ENCODE measurements at regions of chr16 and their contacts with region 1.

Region 1: DNA sequence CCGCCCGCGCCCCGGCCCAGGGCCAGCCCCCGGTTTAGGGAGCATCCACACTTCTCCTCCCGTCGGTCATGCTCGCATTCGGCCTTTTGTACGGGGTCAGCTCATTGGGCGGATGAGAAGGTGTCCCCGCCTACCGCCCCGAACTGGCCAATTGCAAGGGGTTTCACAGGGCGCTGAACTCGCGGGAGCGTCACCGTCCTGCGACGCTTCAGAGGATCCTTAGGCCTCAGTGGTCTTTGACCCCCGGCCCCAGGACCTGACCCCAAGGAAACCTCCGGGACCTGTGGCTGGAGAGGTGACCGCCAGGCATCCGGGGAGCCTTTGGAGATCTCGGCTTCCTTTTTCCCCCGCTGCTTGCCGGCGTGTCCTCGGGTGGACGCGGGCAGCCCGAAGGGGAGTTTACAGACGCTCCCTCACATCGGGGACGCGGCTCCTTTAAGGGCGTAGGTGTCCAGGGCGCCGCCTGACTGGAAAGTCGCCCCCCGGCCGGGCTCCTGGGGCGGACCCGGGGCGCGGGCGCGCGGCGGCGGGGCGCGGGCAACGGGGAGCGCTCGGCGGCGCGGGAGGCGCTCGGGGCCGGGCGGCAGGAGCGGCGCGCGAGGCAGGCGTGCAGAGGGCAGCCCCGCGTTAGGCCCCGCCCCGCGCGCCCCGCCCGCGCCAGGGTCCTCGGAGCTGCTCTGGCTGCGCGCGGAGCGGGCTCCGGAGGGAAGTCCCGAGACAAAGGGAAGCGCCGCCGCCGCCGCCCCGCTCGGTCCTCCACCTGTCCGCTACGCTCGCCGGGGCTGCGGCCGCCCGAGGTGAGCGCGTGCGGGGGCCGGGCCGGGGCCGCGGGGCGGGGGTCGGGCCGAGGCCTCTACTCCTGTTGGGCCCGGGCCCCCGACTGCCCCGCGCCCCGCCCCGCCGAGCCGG is at the start of gene UBE2I:
- DNase-seq: peak; percentile 96 to 99 (median 98)
- ATAC-seq: peak; percentile 73
- H3K4me3 ChIP-seq: peak within 1 kb of the TSS; percentile 82 to 95
- H3K4me3 Mint-ChIP-seq: peak within 1 kb of the TSS; percentile 92
- H3K27ac ChIP-seq: peak within 1 kb of the TSS; percentile 100
- H3K27ac Mint-ChIP-seq: peak within 1 kb of the TSS; percentile 100
- H3K4me1 ChIP-seq: peaks cover 50% of the 10 kb centered on the region
- H3K4me1 Mint-ChIP-seq: peaks cover 41% of the 10 kb centered on the region
- H3K27me3 ChIP-seq: no peaks in the 10 kb centered on the region
- H3K27me3 Mint-ChIP-seq: no peaks in the 10 kb centered on the region
- CTCF ChIP-seq: no peak
- total RNA-seq, gene UBE2I: 285 to 294 TPM

Region 2: GRCh38 chr16:1208239-1208830 is 100.9 kb before region 1 on chr16:
- CTCF ChIA-PET with region 1: no interaction called
- POLR2A ChIA-PET with region 1: no interaction called
- intact Hi-C with region 1: no loop called
- DNase-seq: peak in 5 of 9 experiments; percentile 14 to 56 (median 35)
- ATAC-seq: peak; percentile 63
- H3K4me3 ChIP-seq: peak overlapping the region; percentile 3 to 30
- H3K4me3 Mint-ChIP-seq: peak overlapping the region; percentile 67
- H3K27ac ChIP-seq: peak overlapping the region in 1 of 2 experiments; percentile 14
- H3K27ac Mint-ChIP-seq: peak overlapping the region; percentile 86
- H3K4me1 ChIP-seq: no peaks in the 10 kb centered on the region
- H3K4me1 Mint-ChIP-seq: peaks cover 5% of the 10 kb centered on the region
- H3K27me3 ChIP-seq: no peaks in the 10 kb centered on the region
- H3K27me3 Mint-ChIP-seq: no peaks in the 10 kb centered on the region
- CTCF ChIP-seq: no peak

Region 3: DNA sequence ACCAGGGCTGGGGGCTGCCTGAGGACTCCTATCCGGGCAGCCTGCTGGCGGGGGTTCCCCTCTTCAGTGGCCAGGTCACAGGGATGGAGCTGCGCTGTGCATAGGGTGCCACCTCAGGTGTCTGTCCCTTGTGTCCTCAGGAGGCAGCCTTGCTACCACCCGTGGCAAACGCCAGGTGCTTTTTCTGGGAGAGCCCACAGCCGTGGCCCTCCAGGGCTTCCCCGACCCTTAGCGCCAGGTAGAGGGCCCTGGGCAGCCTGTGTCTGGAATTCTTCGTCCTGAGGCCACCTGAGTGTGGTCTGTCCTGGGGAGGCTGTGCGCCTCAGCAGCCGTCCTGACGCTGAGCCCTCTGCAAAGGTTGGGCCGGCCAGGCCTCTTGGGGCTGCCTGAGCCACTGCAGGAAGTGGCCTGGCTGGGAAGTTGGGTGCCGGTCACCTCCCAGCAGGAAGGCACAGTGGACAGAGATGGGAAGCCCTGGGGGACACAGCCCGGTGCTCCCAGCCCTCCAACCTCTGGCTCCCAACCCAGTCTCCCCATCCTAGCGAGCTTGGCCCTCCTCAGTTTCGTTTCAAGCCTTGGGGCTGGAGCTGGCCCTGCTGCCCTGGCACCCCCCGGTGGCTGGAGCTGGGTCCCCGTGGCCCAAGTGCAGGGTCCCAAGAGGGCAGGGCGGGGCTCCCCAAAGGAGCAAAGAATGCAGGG is 16.6 kb after region 1 on chr16:
- CTCF ChIA-PET with region 1: interaction called, 3 read pairs
- POLR2A ChIA-PET with region 1: no interaction called
- intact Hi-C with region 1: loop called in 1 of 2 experiments (anchors 2 kb)
- DNase-seq: no peak
- ATAC-seq: no peak
- H3K4me3 ChIP-seq: no peak overlapping the region
- H3K4me3 Mint-ChIP-seq: no peak overlapping the region
- H3K27ac ChIP-seq: no peak overlapping the region
- H3K27ac Mint-ChIP-seq: no peak overlapping the region
- H3K4me1 ChIP-seq: no peaks in the 10 kb centered on the region
- H3K4me1 Mint-ChIP-seq: peaks cover 1% of the 10 kb centered on the region
- H3K27me3 ChIP-seq: no peaks in the 10 kb centered on the region
- H3K27me3 Mint-ChIP-seq: no peaks in the 10 kb centered on the region
- CTCF ChIP-seq: no peak

Region 4: GRCh38 chr16:1351582-1352362 is 42.5 kb after region 1 on chr16 and contains the starts of genes GNPTG and TSR3:
- CTCF ChIA-PET with region 1: no interaction called
- POLR2A ChIA-PET with region 1: interaction called, 3 read pairs
- intact Hi-C with region 1: loop called in 1 of 2 experiments (anchors 1 kb)
- DNase-seq: peak; percentile 68 to 95 (median 82)
- ATAC-seq: peak; percentile 87
- H3K4me3 ChIP-seq: peak within 1 kb of the TSS; percentile 76 to 84
- H3K4me3 Mint-ChIP-seq: peak within 1 kb of the TSS; percentile 82
- H3K27ac ChIP-seq: peak within 1 kb of the TSS; percentile 39 to 50
- H3K27ac Mint-ChIP-seq: peak within 1 kb of the TSS; percentile 72
- H3K4me1 ChIP-seq: peaks cover 24% of the 10 kb centered on the region
- H3K4me1 Mint-ChIP-seq: peaks cover 35% of the 10 kb centered on the region
- H3K27me3 ChIP-seq: no peaks in the 10 kb centered on the region
- H3K27me3 Mint-ChIP-seq: no peaks in the 10 kb centered on the region
- CTCF ChIP-seq: no peak
- total RNA-seq, gene GNPTG: 30.7 to 31.9 TPM
- total RNA-seq, gene TSR3: 21.6 to 22.7 TPM

Region 5: DNA sequence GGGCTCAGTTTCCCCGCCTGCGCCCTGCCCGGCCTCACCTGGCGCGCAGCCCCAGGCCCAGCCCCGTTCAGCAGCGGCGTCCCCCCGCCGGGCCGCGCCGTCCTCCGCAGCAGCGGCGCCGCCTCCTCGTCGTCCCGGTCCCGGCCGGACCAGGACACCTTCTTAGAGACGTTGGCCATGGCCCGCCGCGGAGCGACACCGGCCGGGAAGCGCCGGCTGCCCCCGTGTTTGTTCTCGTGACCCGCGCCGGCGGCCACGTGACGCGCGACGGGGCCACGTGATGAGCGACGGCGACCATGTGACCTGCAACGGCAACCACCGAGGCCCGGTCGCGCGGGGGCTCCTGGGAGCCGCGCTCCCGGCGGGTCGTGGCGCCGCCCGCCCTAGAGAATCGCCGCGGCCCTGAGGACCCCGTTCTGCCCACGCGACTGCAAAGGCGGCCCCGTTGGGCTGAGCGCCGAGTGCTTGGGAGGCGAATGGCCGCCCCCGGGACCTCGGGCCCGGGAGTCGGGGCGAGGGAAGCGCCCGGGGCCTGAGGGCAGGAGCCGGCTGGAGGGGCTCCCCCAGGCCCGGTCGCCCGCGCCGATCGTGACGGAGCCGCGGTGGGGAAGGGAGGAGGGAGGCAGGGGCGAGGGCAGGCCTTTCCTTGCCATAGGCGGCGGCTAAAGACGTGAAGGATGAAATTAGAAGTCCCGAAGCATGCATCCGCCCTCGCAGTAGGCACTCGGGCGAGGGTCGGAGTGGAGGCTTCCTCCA is 165.7 kb after region 1 on chr16 and contains the start of gene CLCN7:
- CTCF ChIA-PET with region 1: no interaction called
- POLR2A ChIA-PET with region 1: no interaction called
- intact Hi-C with region 1: loop called in 1 of 2 experiments (anchors 10 kb)
- DNase-seq: peak; percentile 58 to 93 (median 87)
- ATAC-seq: peak; percentile 82
- H3K4me3 ChIP-seq: peak within 1 kb of the TSS; percentile 60 to 84
- H3K4me3 Mint-ChIP-seq: peak within 1 kb of the TSS; percentile 83
- H3K27ac ChIP-seq: peak within 1 kb of the TSS; percentile 75 to 81
- H3K27ac Mint-ChIP-seq: peak within 1 kb of the TSS; percentile 90
- H3K4me1 ChIP-seq: peaks cover 31% of the 10 kb centered on the region
- H3K4me1 Mint-ChIP-seq: peaks cover 40% of the 10 kb centered on the region
- H3K27me3 ChIP-seq: no peaks in the 10 kb centered on the region
- H3K27me3 Mint-ChIP-seq: no peaks in the 10 kb centered on the region
- CTCF ChIP-seq: no peak
- total RNA-seq, gene CLCN7: 85.7 to 90.0 TPM

Region 6: DNA sequence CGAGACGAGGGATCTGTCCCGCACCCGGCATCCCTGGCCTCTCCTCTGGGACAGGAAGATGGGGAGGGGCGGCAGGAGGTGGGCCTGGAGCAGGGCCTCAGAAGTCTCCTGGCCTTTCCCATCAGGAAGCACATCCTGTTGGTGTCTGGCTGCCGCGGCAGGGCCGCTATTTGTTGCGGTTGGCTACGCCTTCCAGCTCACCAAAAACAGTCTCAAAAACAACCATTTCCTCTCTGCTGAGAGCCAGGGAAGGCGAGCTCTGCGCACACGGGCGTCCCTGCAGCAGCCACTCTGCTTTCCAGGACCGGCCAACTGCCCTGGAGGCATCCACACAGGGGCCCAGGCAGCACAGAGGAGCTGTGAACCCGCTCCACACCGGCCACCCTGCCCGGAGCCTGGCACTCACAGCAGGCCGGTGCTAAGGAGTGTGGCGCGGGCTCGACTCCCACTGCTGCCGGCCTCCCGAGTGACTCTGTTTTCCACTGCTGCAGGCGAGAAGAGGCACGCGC is 224.3 kb after region 1 on chr16 and contains the start of gene TMEM204:
- CTCF ChIA-PET with region 1: no interaction called
- POLR2A ChIA-PET with region 1: no interaction called
- intact Hi-C with region 1: loop called in 1 of 2 experiments (anchors 10 kb)
- DNase-seq: peak in 8 of 9 experiments; percentile 34 to 83 (median 53)
- ATAC-seq: peak; percentile 35
- H3K4me3 ChIP-seq: peak within 1 kb of the TSS; percentile 78 to 95
- H3K4me3 Mint-ChIP-seq: peak within 1 kb of the TSS; percentile 88
- H3K27ac ChIP-seq: peak within 1 kb of the TSS; percentile 69 to 75
- H3K27ac Mint-ChIP-seq: peak within 1 kb of the TSS; percentile 83
- H3K4me1 ChIP-seq: peaks cover 50% of the 10 kb centered on the region
- H3K4me1 Mint-ChIP-seq: peaks cover 51% of the 10 kb centered on the region
- H3K27me3 ChIP-seq: no peaks in the 10 kb centered on the region
- H3K27me3 Mint-ChIP-seq: no peaks in the 10 kb centered on the region
- CTCF ChIP-seq: no peak
- total RNA-seq, gene TMEM204: 6.8 to 7.3 TPM

Region 7: GRCh38 chr16:2267913-2268666 is 958.9 kb after region 1 on chr16 and contains the start of gene RNPS1:
- CTCF ChIA-PET with region 1: no interaction called
- POLR2A ChIA-PET with region 1: no interaction called
- intact Hi-C with region 1: loop called in 1 of 2 experiments (anchors 2 kb)
- DNase-seq: peak; percentile 90 to 99 (median 97)
- ATAC-seq: peak; percentile 81
- H3K4me3 ChIP-seq: peak within 1 kb of the TSS; percentile 94 to 100
- H3K4me3 Mint-ChIP-seq: peak within 1 kb of the TSS; percentile 96
- H3K27ac ChIP-seq: peak within 1 kb of the TSS; percentile 96 to 99
- H3K27ac Mint-ChIP-seq: peak within 1 kb of the TSS; percentile 97
- H3K4me1 ChIP-seq: peaks cover 30% of the 10 kb centered on the region
- H3K4me1 Mint-ChIP-seq: peaks cover 34% of the 10 kb centered on the region
- H3K27me3 ChIP-seq: no peaks in the 10 kb centered on the region
- H3K27me3 Mint-ChIP-seq: no peaks in the 10 kb centered on the region
- CTCF ChIP-seq: no peak
- total RNA-seq, gene RNPS1: 239 to 246 TPM